IMR-90 (cell line): ENCODE measurements at regions of chr16 and their contacts with region 1.

Region 1: DNA sequence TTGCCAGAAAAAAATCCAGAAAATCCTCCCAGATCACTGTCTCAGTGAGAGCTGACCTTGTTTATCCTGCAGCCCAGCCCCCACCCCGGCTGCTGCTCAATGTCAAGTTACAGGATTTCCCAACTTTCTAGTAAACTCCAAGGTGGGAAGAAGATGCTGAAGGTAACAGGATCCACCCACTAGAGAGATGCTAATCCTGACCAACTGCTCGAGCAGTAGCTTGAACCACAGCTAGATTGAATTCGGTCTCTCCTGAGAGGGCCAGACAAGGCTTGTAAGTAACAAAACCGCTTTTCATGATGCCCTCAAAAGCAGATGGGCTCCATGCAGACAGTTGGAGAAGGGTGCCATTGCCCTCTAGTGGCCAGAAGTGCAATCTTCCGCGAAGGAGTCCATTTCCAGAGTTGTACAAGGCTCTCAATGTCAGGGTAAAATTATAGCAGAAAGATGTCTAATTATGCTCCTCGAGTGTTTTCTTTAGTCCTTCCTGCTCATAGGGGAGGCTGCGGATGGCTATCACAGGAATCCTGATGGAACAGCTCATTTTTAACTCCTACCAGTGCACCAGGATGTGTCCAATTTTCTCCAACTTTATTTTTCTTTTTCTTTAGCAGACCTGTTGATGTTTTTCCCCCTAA is 3.9 kb downstream of the CDH11 start:
- DNase-seq: peak; percentile 90
- ATAC-seq: peak; percentile 7
- H3K4me3 ChIP-seq: 0 out of 2 replicates have a peak overlapping the region, but pooled peaks have one; percentile 8
- H3K27ac ChIP-seq: peak overlapping the region; percentile 69
- H3K4me1 ChIP-seq: peaks cover 4% of the 10 kb centered on the region
- H3K27me3 ChIP-seq: no peaks in the 10 kb centered on the region
- CTCF ChIP-seq: peak; percentile 95
- POLR2A ChIP-seq: peak; percentile 48
- RAD21 ChIP-seq: peak; percentile 93

Region 2: GRCh38 chr16:63361032-63361624 is 1756.8 kb before region 1 on chr16:
- CTCF ChIA-PET with region 1: interaction called, 4 read pairs
- POLR2A ChIA-PET with region 1: no interaction called
- dilution Hi-C with region 1: no loop called
- in situ Hi-C with region 1: loop called (anchors 25 kb)
- intact Hi-C with region 1: loop called (anchors 2 kb)
- DNase-seq: peak; percentile 66
- ATAC-seq: peak; percentile 77
- H3K4me3 ChIP-seq: no peak overlapping the region
- H3K27ac ChIP-seq: no peak overlapping the region
- H3K4me1 ChIP-seq: no peaks in the 10 kb centered on the region
- H3K27me3 ChIP-seq: no peaks in the 10 kb centered on the region
- CTCF ChIP-seq: peak; percentile 78
- POLR2A ChIP-seq: no peak
- RAD21 ChIP-seq: peak; percentile 74

Region 3: GRCh38 chr16:64738321-64738960 is 379.5 kb before region 1 on chr16:
- CTCF ChIA-PET with region 1: no interaction called
- POLR2A ChIA-PET with region 1: no interaction called
- dilution Hi-C with region 1: no loop called
- in situ Hi-C with region 1: no loop called
- intact Hi-C with region 1: loop called (anchors 10 kb)
- DNase-seq: peak; percentile 66
- ATAC-seq: peak; percentile 80
- H3K4me3 ChIP-seq: no peak overlapping the region
- H3K27ac ChIP-seq: peak overlapping the region; percentile 82
- H3K4me1 ChIP-seq: peaks cover 3% of the 10 kb centered on the region
- H3K27me3 ChIP-seq: no peaks in the 10 kb centered on the region
- CTCF ChIP-seq: no peak
- POLR2A ChIP-seq: no peak
- RAD21 ChIP-seq: no peak

Region 4: GRCh38 chr16:65524997-65525396 is 407.1 kb after region 1 on chr16:
- CTCF ChIA-PET with region 1: no interaction called
- POLR2A ChIA-PET with region 1: no interaction called
- dilution Hi-C with region 1: no loop called
- in situ Hi-C with region 1: no loop called
- intact Hi-C with region 1: loop called (anchors 5 kb)
- DNase-seq: peak; percentile 97
- ATAC-seq: peak; percentile 96
- H3K4me3 ChIP-seq: no peak overlapping the region
- H3K27ac ChIP-seq: no peak overlapping the region
- H3K4me1 ChIP-seq: peaks cover 4% of the 10 kb centered on the region
- H3K27me3 ChIP-seq: peaks cover 29% of the 10 kb centered on the region
- CTCF ChIP-seq: no peak
- POLR2A ChIP-seq: no peak
- RAD21 ChIP-seq: no peak

Region 5: GRCh38 chr16:65754820-65755691 is 637.1 kb after region 1 on chr16:
- CTCF ChIA-PET with region 1: interaction called, 3 read pairs
- POLR2A ChIA-PET with region 1: no interaction called
- dilution Hi-C with region 1: no loop called
- in situ Hi-C with region 1: no loop called
- intact Hi-C with region 1: loop called (anchors 5 kb)
- DNase-seq: peak; percentile 75
- ATAC-seq: peak; percentile 89
- H3K4me3 ChIP-seq: no peak overlapping the region
- H3K27ac ChIP-seq: peak overlapping the region; percentile 42; the same call in 1 of the 2 replicates
- H3K4me1 ChIP-seq: peaks cover 13% of the 10 kb centered on the region; the same call in 1 of the 2 replicates
- H3K27me3 ChIP-seq: peaks cover 20% of the 10 kb centered on the region
- CTCF ChIP-seq: no peak
- POLR2A ChIP-seq: no peak
- RAD21 ChIP-seq: no peak

Region 6: DNA sequence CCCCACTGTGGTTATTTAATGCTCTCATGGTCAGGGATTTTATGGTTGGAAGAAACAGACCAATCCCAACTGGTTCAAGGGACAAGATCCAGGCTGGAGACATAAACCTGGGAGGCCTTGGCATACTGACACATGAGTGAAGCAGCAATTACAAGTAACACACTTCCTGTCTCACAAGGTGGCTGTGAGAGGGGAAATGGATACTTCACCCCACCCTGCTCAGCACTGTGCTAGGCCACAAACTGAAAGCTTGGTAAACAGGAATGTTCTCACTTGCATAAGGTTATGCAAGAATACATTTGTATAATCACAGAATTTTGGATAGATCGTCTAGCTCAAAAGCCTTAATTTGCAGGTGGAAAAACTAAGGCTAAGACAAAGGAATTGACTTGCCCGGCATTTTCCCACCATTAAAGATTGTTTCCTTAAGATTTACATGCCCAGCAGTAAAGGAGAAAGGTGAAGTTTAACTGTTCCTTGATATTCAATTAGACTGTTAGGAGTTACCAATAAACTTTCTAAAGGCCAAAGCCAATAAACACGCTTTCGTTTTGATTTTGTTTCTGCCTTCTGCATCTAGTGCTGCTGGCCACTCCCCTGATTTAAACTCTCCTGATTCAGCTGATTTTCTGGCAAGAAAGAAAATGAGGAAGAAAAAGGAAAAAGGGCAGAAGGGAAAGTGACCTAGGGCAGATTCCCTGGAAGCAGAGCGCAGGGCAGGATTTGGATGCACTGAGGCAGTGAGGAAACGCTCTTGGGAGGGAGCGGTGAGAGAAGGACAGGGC is 1033.0 kb after region 1 on chr16:
- CTCF ChIA-PET with region 1: no interaction called
- POLR2A ChIA-PET with region 1: no interaction called
- dilution Hi-C with region 1: no loop called
- in situ Hi-C with region 1: no loop called
- intact Hi-C with region 1: loop called (anchors 2 kb)
- DNase-seq: peak; percentile 28
- ATAC-seq: no peak
- H3K4me3 ChIP-seq: no peak overlapping the region
- H3K27ac ChIP-seq: peak overlapping the region; percentile 98; the same call in 1 of the 2 replicates
- H3K4me1 ChIP-seq: peaks cover 31% of the 10 kb centered on the region
- H3K27me3 ChIP-seq: no peaks in the 10 kb centered on the region
- CTCF ChIP-seq: no peak
- POLR2A ChIP-seq: no peak
- RAD21 ChIP-seq: no peak